ENCODE measurements at regions of chr3 and their contacts with region 1.

Region 1: DNA sequence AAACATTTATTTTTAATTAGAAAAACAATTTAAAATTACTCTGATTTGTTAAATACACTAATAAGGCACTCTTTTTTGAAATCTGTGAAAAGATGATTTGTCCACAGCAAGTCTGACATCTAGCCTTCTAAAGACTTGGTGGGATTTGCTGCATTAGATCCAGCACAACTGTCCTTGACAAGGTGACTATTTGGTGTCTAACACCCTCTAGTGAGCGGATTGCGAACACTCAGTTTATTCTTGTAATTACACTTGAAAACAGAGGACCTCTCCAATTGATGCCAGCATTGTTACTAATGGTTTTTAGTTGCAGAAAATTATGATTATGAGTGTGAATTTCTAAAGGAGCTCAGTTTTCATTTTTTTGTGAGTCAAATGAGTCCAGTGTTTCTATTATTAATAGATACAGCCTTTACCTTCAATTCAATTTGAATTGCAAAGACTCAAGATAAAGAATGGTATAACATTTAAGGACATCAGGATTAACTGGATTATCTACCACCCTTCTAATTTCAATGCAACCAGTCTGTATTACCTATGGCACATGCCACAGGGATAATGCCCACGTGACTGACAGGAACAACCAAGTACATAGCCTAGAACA is 29.7 kb upstream of the STRIT1 start:
- DNase-seq: peak; percentile 82
- H3K4me3 ChIP-seq: no peak overlapping the region
- H3K27ac ChIP-seq: no peak overlapping the region
- H3K4me1 ChIP-seq: no peaks in the 10 kb centered on the region
- H3K27me3 ChIP-seq: no peaks in the 10 kb centered on the region

Region 2: DNA sequence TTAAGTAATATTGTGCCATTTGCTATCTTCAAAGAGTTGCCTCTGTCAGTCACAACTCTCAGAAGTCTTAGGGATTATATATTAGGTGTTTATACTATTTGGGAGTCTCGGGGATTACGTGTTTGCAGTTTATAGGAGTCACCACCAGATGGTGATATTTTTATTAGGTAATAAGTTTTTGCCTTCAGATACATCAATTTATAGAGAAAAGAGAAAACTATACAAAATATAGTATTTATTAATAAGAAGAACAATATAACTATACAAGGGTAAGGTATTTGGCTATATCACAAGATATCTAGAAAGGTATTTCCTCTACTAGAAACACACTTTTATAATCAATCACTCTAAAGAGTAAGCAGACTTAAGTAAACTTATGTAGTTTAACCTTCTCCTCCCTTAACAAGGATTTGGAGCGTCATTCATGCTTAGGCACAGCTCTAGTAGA is 988.2 kb before region 1 on chr3:
- in situ Hi-C with region 1: loop called (anchors 25 kb)
- DNase-seq: peak; percentile 63
- H3K4me3 ChIP-seq: no peak overlapping the region
- H3K27ac ChIP-seq: no peak overlapping the region
- H3K4me1 ChIP-seq: peaks cover 9% of the 10 kb centered on the region
- H3K27me3 ChIP-seq: no peaks in the 10 kb centered on the region

Region 3: GRCh38 chr3:154766765-154767503 is 556.2 kb before region 1 on chr3:
- in situ Hi-C with region 1: loop called (anchors 10 kb)
- DNase-seq: no peak
- H3K4me3 ChIP-seq: no peak overlapping the region
- H3K27ac ChIP-seq: no peak overlapping the region
- H3K4me1 ChIP-seq: 0 out of 2 replicates have a peak, but pooled peaks cover 4% of the 10 kb centered on the region
- H3K27me3 ChIP-seq: no peaks in the 10 kb centered on the region

Region 4: GRCh38 chr3:154954753-154955152 is 368.4 kb before region 1 on chr3:
- in situ Hi-C with region 1: loop called (anchors 10 kb)
- DNase-seq: peak; percentile 72
- H3K4me3 ChIP-seq: no peak overlapping the region
- H3K27ac ChIP-seq: no peak overlapping the region
- H3K4me1 ChIP-seq: no peaks in the 10 kb centered on the region
- H3K27me3 ChIP-seq: no peaks in the 10 kb centered on the region

Region 5: GRCh38 chr3:155805802-155806618 is 482.8 kb after region 1 on chr3 and contains the start of gene C3orf33:
- in situ Hi-C with region 1: no loop called
- DNase-seq: peak; percentile 84
- H3K4me3 ChIP-seq: peak within 1 kb of the TSS; percentile 86
- H3K27ac ChIP-seq: peak within 1 kb of the TSS; percentile 33
- H3K4me1 ChIP-seq: peaks cover 24% of the 10 kb centered on the region
- H3K27me3 ChIP-seq: no peaks in the 10 kb centered on the region
- total RNA-seq, gene C3orf33: 2.1 and 3.9 TPM in 2 replicates

Measured in GM23248 (cell line).